ENCODE measurements at regions of chr9 and their contacts with region 1.

Region 1: GRCh38 chr9:136225748-136226679 is 19.6 kb downstream of the QSOX2 start:
- DNase-seq: peak; percentile 65
- H3K4me3 Mint-ChIP-seq: no peak overlapping the region
- H3K27ac Mint-ChIP-seq: no peak overlapping the region
- H3K4me1 Mint-ChIP-seq: peaks cover 14% of the 10 kb centered on the region
- H3K27me3 Mint-ChIP-seq: no peaks in the 10 kb centered on the region
- CTCF ChIP-seq: peak; percentile 85

Region 2: GRCh38 chr9:136170006-136170901 is 55.8 kb before region 1 on chr9:
- CTCF ChIA-PET with region 1: interaction called, 6 read pairs
- POLR2A ChIA-PET with region 1: no interaction called
- intact Hi-C with region 1: loop called (anchors 1 kb)
- DNase-seq: peak; percentile 36
- H3K4me3 Mint-ChIP-seq: no peak overlapping the region
- H3K27ac Mint-ChIP-seq: no peak overlapping the region
- H3K4me1 Mint-ChIP-seq: no peaks in the 10 kb centered on the region
- H3K27me3 Mint-ChIP-seq: peaks cover 36% of the 10 kb centered on the region
- CTCF ChIP-seq: peak; percentile 82

Region 3: DNA sequence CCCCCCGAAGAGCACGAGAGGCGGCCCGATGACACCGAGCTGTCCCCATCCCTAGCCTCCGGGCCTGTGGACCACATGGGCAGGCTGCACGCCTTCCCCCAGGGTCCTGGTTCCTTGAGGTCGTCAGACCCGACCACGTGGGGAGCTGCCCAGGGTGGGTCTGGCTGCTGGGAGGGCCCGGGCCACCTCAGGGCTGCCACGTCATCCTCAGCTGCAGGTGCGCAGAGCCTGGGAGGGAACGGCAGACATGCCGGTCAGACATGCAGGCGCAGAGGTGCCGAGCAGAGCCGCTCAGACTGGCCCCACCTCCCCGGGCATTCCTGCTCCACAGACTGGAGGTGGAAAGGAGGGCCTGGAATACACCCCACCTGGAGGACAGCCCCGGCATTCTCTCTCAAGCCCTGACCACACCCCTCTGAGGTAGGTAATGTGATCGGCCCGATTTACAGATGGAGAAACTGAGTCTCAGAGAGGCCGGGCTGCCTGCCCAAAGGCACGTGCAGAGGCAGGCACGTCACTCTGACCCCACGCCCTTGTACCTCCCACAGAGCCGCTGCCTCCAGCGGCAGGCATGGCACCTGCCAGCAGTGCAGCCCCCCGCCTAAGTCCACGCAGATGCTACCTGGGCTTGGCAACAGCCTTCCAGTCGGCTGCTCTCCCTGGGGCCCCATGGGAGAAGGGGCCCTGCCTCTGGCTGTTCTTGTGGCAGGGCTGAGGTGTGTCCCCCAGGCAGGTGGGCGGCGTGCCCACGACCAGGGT is 77.2 kb after region 1 on chr9:
- CTCF ChIA-PET with region 1: no interaction called
- POLR2A ChIA-PET with region 1: no interaction called
- intact Hi-C with region 1: no loop called
- DNase-seq: no peak
- H3K4me3 Mint-ChIP-seq: no peak overlapping the region
- H3K27ac Mint-ChIP-seq: no peak overlapping the region
- H3K4me1 Mint-ChIP-seq: no peaks in the 10 kb centered on the region
- H3K27me3 Mint-ChIP-seq: peaks cover 8% of the 10 kb centered on the region
- CTCF ChIP-seq: no peak